ENCODE measurements at regions of chr15 and their contacts with region 1.

Region 1: GRCh38 chr15:99104788-99105513 is at the start of gene SYNM:
- DNase-seq: peak; percentile 73 to 91
- ATAC-seq: peak; percentile 53 to 57
- H3K4me3 ChIP-seq: peak within 1 kb of the TSS; percentile 63 to 86 (median 75)
- H3K27ac ChIP-seq: peak within 1 kb of the TSS; percentile 88 to 97 (median 94)
- H3K4me1 ChIP-seq: peaks cover 43 to 56% of the 10 kb centered on the region in 2 donors
- H3K27me3 ChIP-seq: no peaks in the 10 kb centered on the region
- CTCF ChIP-seq: peak; percentile 79 to 98 (median 98)
- POLR2A ChIP-seq: peak; percentile 89 to 93
- total RNA-seq, gene SYNM: 200 to 308 (median 266) TPM

Region 2: GRCh38 chr15:99014803-99015676 is 89.9 kb before region 1 on chr15:
- in situ Hi-C with region 1: no loop called
- intact Hi-C with region 1: no loop called
- DNase-seq: peak; percentile 85 to 91
- ATAC-seq: peak; percentile 73 to 77
- H3K4me3 ChIP-seq: peak overlapping the region; percentile 53 to 84 (median 68)
- H3K27ac ChIP-seq: peak overlapping the region; percentile 97 to 99 (median 98)
- H3K4me1 ChIP-seq: peaks cover 23 to 30% of the 10 kb centered on the region in 2 donors
- H3K27me3 ChIP-seq: no peaks in the 10 kb centered on the region
- CTCF ChIP-seq: peak in 1 of 5 experiments; percentile 29
- POLR2A ChIP-seq: peak; percentile 80 to 94

Region 3: GRCh38 chr15:99123706-99124451 is 18.9 kb after region 1 on chr15:
- in situ Hi-C with region 1: no loop called
- intact Hi-C with region 1: loop called (anchors 2 kb)
- DNase-seq: peak; percentile 85 to 93
- ATAC-seq: peak; percentile 82 to 88
- H3K4me3 ChIP-seq: peak overlapping the region; percentile 33 to 59 (median 44)
- H3K27ac ChIP-seq: peak overlapping the region; percentile 88 to 97 (median 94)
- H3K4me1 ChIP-seq: peaks cover 89 to 91% of the 10 kb centered on the region in 2 donors
- H3K27me3 ChIP-seq: no peaks in the 10 kb centered on the region
- CTCF ChIP-seq: no peak
- POLR2A ChIP-seq: peak; percentile 40 to 52

Region 4: DNA sequence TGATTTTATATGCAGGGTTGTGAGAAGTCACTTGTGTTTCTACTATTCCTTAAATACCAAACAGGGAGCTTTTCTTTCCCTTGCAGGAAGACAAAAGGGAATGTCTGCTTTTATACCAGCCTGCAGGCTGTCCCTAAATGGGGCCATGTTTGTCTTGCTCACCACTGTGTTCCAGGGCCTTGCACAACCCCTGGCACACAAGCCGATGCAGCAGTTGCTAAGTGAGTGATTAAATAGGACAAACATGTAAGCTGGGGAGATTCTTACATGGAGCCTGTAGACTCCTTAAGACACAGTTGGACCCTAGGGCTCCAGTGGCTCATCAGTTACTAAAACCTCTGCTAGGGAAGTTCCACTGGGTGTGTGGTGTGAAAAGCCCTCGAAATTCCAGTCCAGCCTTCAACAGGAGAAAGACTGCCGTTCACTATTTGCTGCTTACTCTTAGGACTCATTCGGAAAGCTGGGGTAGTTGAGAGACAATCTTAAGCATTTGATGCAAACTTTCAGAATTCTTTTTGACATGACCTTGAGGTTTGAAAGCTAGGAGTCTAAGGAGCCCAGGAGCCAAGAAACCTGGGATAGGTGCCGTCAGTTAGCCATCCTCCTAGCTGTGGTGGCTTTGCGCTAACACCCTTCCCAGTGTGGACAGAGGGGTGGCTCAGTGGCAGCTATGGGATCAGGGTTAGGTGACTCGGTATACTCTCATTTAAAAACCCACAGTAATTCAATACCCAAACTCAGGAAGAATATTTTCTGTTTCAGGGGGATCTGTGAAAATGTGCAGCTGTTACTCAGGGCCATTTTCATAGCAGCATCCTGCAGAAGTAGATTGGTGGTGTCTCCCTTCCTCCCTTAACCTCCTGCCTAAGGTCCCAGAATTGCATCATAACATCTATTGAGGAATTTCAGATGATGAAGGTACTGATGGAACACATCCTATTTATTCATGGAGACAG is 39.0 kb after region 1 on chr15:
- in situ Hi-C with region 1: no loop called
- intact Hi-C with region 1: loop called (anchors 2 kb)
- DNase-seq: peak; percentile 85 to 95
- ATAC-seq: peak; percentile 98
- H3K4me3 ChIP-seq: no peak overlapping the region
- H3K27ac ChIP-seq: peak overlapping the region; percentile 85 to 97 (median 90)
- H3K4me1 ChIP-seq: peaks cover 42 to 48% of the 10 kb centered on the region in 2 donors
- H3K27me3 ChIP-seq: no peaks in the 10 kb centered on the region
- CTCF ChIP-seq: no peak
- POLR2A ChIP-seq: no peak

Region 5: GRCh38 chr15:99181545-99181971 is 76.6 kb after region 1 on chr15:
- in situ Hi-C with region 1: no loop called
- intact Hi-C with region 1: loop called (anchors 1 kb)
- DNase-seq: peak; percentile 71 to 94
- ATAC-seq: peak; percentile 86 to 95
- H3K4me3 ChIP-seq: no peak overlapping the region
- H3K27ac ChIP-seq: peak overlapping the region; percentile 82 to 90 (median 86)
- H3K4me1 ChIP-seq: peaks cover 46 to 48% of the 10 kb centered on the region in 2 donors
- H3K27me3 ChIP-seq: no peaks in the 10 kb centered on the region
- CTCF ChIP-seq: no peak
- POLR2A ChIP-seq: peak in 1 of 2 donors; percentile 5

Region 6: DNA sequence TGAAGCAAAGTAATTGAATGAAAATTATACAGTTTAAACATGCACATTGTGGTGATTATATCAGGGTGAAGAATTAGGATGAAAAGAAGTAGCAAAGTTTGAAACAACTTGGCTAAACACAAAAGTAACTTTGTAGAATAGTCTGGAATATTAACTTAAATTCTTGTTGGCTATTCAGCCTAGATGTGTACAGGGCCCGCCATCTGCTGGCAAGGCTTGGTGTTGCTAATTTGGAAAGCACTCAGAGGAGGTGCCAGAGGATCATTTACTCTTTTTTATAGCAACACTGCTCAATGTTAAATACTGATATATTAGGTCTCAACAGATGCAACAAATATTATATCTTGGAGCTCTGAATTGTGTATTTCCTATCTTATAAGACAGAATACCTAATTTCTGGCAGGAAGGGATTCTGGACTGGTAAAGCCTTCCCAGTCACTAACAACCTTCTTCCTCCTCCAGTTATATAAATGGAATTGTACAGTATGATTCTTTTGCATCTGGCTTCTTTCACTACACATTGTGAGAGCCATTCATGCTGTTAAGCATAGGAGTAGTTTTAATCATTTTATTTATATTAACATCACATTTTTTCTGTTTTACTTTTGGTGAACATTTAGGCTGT is 108.3 kb after region 1 on chr15:
- in situ Hi-C with region 1: loop called (anchors 5 kb)
- intact Hi-C with region 1: loop called (anchors 1 kb)
- DNase-seq: peak; percentile 68 to 83
- ATAC-seq: peak; percentile 57 to 80
- H3K4me3 ChIP-seq: no peak overlapping the region
- H3K27ac ChIP-seq: peak overlapping the region; percentile 54 to 81 (median 66)
- H3K4me1 ChIP-seq: peaks cover 12 to 40% of the 10 kb centered on the region in 2 donors
- H3K27me3 ChIP-seq: no peaks in the 10 kb centered on the region
- CTCF ChIP-seq: peak; percentile 87 to 96 (median 91)
- POLR2A ChIP-seq: no peak

Region 7: DNA sequence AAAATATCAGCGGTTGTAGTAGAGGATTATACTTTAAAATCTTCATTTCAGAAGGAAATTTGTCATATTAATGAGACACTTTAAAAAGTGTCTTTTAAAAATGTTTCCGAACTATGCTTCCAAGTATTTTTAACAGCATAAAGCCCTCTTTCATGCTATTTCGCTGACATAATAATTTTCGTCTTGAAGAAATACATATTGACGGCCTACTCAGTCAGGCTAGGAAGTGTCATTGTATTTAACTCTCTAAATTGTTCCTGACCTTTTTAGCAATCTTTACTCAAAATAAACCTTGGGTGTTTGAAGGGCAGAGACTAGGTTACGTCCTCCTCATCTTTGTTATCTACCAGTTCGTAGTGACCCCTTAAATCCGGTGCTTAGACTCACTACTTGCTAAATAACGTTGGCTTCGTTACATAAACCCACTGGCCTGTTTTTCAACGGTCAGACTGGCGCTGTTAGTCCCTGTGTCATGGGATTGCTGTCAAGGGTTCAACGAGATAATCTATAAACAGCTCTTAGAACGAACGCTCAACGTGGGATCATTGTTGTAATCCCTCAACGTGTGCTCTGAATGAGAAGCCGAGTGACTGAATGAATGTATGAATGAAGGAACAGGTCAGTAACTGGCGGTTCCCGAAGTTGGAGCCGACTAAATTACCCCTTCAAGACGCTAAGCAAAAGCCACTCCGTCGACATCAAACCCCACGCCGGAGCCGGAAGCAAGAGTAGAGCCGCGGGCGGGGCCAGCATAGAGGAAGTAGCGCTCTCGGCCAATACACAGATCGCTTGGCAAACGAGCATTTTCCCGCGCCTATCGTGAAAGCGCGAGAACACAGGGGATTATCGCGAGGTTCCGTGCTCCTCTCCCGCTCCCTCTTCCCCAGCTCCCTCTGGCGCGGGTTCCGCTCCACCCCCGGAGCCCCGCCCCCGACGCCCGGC is 145.8 kb after region 1 on chr15:
- in situ Hi-C with region 1: no loop called
- intact Hi-C with region 1: loop called (anchors 1 kb)
- DNase-seq: peak; percentile 98 to 99
- ATAC-seq: peak; percentile 94 to 95
- H3K4me3 ChIP-seq: peak overlapping the region; percentile 53 to 89 (median 84)
- H3K27ac ChIP-seq: peak overlapping the region; percentile 93 to 96 (median 96)
- H3K4me1 ChIP-seq: peaks cover 34 to 40% of the 10 kb centered on the region in 2 donors
- H3K27me3 ChIP-seq: no peaks in the 10 kb centered on the region
- CTCF ChIP-seq: no peak
- POLR2A ChIP-seq: peak; percentile 89 to 96

Region 8: DNA sequence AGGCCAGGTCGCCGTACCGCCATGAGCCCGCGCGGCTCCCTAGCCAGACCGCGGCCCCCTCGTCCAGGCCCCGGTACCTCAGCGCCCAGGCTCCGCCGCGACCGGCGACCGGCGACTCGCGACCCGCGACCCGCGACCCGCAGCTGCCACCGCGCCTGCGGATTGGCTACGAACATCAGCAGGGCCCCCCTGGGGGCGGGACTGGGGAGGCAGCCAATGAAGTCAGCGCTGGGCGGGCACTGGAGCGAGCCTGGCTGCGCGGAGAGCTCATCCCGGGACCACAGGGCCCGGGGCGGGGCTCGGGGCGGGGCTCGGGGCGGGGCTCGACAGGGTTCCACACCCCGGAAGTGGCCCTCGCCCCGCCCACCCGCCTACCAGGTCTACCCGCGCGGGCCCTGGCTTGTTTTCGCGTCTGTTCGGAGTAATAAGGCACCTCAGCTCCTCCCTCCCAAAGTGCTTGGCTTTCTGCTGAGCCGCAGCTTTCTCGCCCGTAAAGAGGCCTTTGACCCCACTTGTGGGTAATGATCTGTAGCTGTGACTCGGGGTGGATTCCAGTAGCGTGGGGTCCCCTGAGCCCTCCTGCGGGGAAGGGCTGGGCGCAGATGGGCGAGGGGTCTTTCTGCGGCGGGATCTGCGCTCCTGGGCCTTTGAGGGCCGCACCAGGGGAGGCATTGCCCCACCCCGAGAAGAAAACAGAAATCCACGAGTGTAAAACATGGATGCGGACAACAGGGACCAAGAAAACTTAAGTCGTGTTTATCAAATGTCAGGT is 628.5 kb after region 1 on chr15 and contains the start of gene LYSMD4:
- in situ Hi-C with region 1: loop called in 2 of 4 experiments (anchors 25 kb)
- intact Hi-C with region 1: no loop called
- DNase-seq: peak; percentile 97 to 98
- ATAC-seq: peak; percentile 87 to 91
- H3K4me3 ChIP-seq: peak within 1 kb of the TSS; percentile 76 to 98 (median 84)
- H3K27ac ChIP-seq: peak within 1 kb of the TSS; percentile 85 to 94 (median 90)
- H3K4me1 ChIP-seq: peaks cover 27 to 33% of the 10 kb centered on the region in 2 donors
- H3K27me3 ChIP-seq: no peaks in the 10 kb centered on the region
- CTCF ChIP-seq: peak in 1 of 5 experiments; percentile 6
- POLR2A ChIP-seq: peak; percentile 90 to 94
- total RNA-seq, gene LYSMD4: 5.1 to 15.8 (median 11.9) TPM